ENCODE measurements at regions of chr2 and their contacts with region 1.

Region 1: DNA sequence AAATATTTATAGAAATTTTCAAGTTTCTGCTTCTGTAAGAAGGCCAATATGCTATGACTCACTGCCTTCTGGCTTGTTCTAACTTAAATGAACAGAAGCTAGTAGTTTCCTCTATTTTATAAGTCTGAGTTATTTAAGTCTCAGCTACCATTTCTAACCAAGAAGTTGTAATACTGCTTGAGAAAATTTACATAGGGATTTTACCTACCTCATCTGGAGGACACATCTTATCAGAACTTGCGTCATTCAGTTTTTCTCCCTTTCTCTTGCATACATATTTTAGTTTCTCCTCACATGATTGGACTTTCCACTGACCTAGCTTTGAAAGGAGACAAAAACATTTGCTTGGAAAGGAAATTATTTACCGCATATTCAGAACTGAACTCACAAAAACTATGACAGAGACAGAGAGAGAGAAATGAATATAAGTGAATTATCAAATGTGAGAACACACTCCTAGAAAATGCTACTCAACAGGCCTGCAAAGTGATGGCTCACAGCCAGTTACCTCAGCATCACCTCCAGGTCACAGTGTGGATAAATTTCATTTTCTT is 81.1 kb upstream of the CD302 start:
- DNase-seq: peak; percentile 72
- H3K4me3 Mint-ChIP-seq: no peak overlapping the region
- H3K27ac Mint-ChIP-seq: peak overlapping the region; percentile 88
- H3K4me1 Mint-ChIP-seq: peaks cover 61% of the 10 kb centered on the region
- H3K27me3 Mint-ChIP-seq: no peaks in the 10 kb centered on the region

Region 2: DNA sequence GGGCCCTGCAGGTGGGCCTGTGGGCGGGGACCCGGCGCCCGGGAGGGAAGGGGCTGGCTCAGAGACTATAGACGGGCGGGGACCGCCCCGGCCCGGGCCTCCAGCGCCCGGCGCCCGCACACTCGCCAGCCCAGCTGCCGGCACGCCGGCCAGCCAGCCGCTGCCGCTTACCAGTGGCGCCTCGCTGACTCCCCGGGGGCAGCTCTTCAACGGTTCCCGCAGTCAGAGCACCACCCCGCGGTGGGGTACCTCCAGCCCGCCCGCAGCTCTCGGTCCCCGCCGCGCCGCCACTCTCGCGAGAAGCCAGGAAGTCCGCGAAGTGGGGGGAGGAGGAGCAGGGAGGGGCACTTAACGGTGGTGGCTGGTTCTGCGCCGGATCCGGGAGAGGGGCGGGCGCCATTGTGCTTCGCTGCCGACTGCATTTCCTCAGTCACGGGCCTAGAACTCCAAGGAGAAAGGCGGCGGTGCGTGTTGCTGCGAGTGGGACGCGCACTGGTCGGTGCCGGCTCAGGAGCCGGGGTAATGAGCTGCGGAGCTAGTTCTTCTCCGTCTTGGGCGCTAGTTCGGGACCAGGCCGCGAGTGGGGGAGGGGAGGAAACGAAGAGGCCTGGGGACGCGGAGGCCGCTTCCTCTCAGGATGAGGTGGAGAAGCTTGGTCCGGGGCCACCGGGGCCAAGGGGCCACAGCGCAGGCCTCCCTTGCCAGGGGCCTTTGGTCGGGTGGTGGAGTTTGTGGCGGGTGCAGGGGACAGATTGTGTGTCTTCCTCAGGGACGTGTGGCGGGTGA is 166.8 kb before region 1 on chr2 and contains the start of gene MARCHF7:
- CTCF ChIA-PET with region 1: no interaction called
- POLR2A ChIA-PET with region 1: interaction called, 3 read pairs
- intact Hi-C with region 1: loop called (anchors 2 kb)
- DNase-seq: peak; percentile 98
- H3K4me3 Mint-ChIP-seq: peak within 1 kb of the TSS; percentile 100
- H3K27ac Mint-ChIP-seq: peak within 1 kb of the TSS; percentile 100
- H3K4me1 Mint-ChIP-seq: peaks cover 47% of the 10 kb centered on the region
- H3K27me3 Mint-ChIP-seq: no peaks in the 10 kb centered on the region
- total RNA-seq, gene MARCHF7: 84.0 to 86.7 TPM

Region 3: GRCh38 chr2:159855557-159856061 is 23.5 kb before region 1 on chr2:
- CTCF ChIA-PET with region 1: no interaction called
- POLR2A ChIA-PET with region 1: no interaction called
- intact Hi-C with region 1: loop called (anchors 1 kb)
- DNase-seq: no peak
- H3K4me3 Mint-ChIP-seq: no peak overlapping the region
- H3K27ac Mint-ChIP-seq: no peak overlapping the region
- H3K4me1 Mint-ChIP-seq: peaks cover 8% of the 10 kb centered on the region
- H3K27me3 Mint-ChIP-seq: no peaks in the 10 kb centered on the region

Region 4: GRCh38 chr2:159895258-159896065 is 16.3 kb after region 1 on chr2:
- CTCF ChIA-PET with region 1: interaction called, 12 read pairs
- POLR2A ChIA-PET with region 1: interaction called, 19 read pairs
- intact Hi-C with region 1: loop called (anchors 1 kb)
- DNase-seq: peak; percentile 47
- H3K4me3 Mint-ChIP-seq: peak overlapping the region; percentile 50
- H3K27ac Mint-ChIP-seq: peak overlapping the region; percentile 89
- H3K4me1 Mint-ChIP-seq: peaks cover 94% of the 10 kb centered on the region
- H3K27me3 Mint-ChIP-seq: no peaks in the 10 kb centered on the region

Region 5: DNA sequence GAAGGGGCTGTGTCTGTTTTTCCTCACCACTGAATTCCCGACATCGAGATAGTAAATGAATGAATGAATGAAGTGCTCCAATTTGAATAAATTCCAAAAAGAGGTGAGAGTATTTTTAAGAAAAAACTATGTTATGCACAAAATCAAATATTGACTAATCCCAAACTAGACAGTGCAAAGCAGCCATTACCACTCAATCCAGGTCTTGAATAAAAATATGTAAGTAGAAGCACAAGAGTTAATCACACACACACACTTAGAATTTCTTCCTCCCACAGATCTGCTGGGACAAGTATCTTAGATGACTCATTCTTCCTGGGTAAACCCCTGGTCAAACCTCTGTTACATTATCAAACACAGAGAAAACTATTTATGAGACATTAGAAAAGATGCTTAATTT is 81.3 kb after region 1 on chr2:
- CTCF ChIA-PET with region 1: no interaction called
- POLR2A ChIA-PET with region 1: no interaction called
- intact Hi-C with region 1: loop called (anchors 1 kb)
- DNase-seq: no peak
- H3K4me3 Mint-ChIP-seq: no peak overlapping the region
- H3K27ac Mint-ChIP-seq: no peak overlapping the region
- H3K4me1 Mint-ChIP-seq: peaks cover 16% of the 10 kb centered on the region
- H3K27me3 Mint-ChIP-seq: peaks cover 5% of the 10 kb centered on the region

Region 6: DNA sequence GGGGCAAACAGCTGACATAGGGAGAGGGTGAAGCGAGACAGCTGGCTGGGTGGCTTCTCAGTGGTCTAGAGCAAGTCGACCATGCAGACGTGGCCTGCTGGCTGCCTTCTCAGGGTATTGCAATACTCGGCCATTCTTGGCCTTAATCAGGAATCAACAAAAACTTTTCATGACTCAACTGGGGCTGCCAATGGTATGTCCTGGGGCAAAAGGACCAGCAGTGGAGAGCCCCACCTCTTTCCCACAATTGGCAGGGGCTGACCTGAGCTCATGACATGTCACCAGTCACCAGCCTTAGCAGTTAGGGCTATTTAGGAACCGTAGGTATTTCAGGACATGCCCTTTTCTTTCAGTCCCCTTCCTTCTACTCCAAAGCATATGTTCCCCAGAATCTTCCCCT is 164.1 kb after region 1 on chr2:
- CTCF ChIA-PET with region 1: no interaction called
- POLR2A ChIA-PET with region 1: no interaction called
- intact Hi-C with region 1: loop called (anchors 5 kb)
- DNase-seq: no peak
- H3K4me3 Mint-ChIP-seq: no peak overlapping the region
- H3K27ac Mint-ChIP-seq: no peak overlapping the region
- H3K4me1 Mint-ChIP-seq: peaks cover 15% of the 10 kb centered on the region
- H3K27me3 Mint-ChIP-seq: peaks cover 10% of the 10 kb centered on the region